HAP-1 (cell line): ENCODE measurements at regions of chr15 and their contacts with region 1.

Region 1: GRCh38 chr15:76866716-76867321 is 38.3 kb downstream of the SCAPER start:
- DNase-seq: peak; percentile 56 to 70
- H3K4me3 ChIP-seq: no peak overlapping the region
- H3K4me1 ChIP-seq: peaks cover 20% of the 10 kb centered on the region
- H3K27me3 ChIP-seq: no peaks in the 10 kb centered on the region

Region 2: DNA sequence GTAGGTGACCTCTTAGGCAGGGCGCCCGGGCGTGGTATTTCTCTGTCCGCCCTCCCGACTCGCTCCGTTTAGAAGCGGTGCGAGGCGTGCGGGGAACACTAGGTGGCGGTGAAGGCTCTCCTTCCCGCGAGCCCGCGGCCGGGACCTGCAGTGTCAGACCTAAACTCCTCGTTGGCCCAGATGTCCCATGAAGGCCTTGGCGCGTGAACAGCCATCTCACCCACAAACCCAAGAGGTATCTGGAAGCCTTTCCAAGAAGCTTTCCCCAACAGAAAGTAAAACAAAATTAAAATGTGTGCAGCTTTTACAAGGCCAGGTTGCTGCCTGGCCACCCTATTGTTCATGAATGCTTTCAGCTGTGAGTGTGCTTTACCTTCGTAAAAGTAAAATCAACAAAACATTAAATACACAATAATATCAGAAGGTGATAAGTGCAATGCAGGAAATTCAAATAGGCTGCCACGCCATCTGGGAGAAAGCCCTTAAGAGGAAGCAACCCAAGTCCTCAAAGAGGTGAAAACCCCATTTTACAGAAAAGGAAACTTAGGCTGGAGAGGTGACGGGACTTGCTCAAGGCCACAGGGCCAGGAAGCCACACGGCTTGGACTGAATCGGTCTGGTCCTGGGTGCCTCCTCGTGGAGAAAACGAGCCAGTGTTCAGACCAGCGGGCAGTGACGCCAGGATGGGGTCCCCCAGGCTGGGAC is 675.8 kb before region 1 on chr15:
- in situ Hi-C with region 1: loop called (anchors 10 kb)
- DNase-seq: peak; percentile 94 to 97
- H3K4me3 ChIP-seq: no peak overlapping the region
- H3K4me1 ChIP-seq: peaks cover 3% of the 10 kb centered on the region
- H3K27me3 ChIP-seq: no peaks in the 10 kb centered on the region

Region 3: DNA sequence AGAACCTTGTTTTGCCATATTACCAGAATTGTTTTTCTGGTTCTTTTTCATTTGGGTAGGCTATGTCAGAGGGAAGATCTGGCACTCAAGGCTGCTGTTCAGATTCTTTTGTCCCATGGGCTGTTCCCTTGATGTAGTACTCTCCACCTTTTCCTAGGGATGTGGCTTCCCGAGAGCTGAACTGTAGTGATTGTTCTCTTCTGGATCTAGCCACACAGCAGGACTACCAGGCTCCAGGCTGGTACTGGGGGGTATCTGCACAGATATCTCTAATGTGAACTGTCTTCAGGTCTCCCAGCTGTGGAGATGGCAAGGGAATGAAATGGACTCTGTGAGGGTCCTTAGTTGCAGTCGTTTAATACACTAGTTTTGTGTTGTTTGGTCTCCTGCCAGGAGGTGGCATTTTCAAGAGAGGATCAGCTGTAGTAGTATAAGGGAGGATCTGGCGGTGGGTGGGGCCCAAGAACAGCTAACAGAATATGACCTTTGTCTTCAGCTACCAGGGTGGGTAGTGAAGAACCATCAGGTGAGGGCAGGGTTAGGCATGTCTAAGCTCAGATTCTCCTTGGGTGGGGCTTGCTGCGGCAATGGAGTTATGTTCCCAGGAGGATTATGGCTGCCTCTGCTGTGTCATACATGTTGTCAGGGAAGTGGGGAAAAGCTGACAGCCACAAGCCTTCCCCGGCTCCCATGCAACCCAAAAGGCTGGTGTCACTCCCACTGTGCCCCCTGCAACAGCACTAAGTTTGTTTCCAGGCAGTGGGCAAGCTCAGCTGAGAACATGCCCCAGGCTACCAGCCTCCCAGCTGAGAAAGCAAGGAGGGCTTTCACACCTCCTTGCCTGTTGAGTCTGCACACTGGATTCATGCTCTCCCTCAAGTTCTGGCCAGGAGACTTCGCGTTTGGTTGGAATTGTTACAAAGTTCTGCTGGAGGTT is 277.7 kb before region 1 on chr15:
- in situ Hi-C with region 1: no loop called
- DNase-seq: peak; percentile 2 to 38
- H3K4me3 ChIP-seq: no peak overlapping the region
- H3K4me1 ChIP-seq: no peaks in the 10 kb centered on the region
- H3K27me3 ChIP-seq: no peaks in the 10 kb centered on the region

Region 4: GRCh38 chr15:78131295-78132061 is 1264.7 kb after region 1 on chr15 and contains the start of gene CIB2:
- in situ Hi-C with region 1: no loop called
- DNase-seq: peak; percentile 93 to 96
- H3K4me3 ChIP-seq: peak within 1 kb of the TSS; percentile 79
- H3K4me1 ChIP-seq: peaks cover 15% of the 10 kb centered on the region
- H3K27me3 ChIP-seq: no peaks in the 10 kb centered on the region